ENCODE measurements at regions of chr3 and their contacts with region 1.

Region 1: DNA sequence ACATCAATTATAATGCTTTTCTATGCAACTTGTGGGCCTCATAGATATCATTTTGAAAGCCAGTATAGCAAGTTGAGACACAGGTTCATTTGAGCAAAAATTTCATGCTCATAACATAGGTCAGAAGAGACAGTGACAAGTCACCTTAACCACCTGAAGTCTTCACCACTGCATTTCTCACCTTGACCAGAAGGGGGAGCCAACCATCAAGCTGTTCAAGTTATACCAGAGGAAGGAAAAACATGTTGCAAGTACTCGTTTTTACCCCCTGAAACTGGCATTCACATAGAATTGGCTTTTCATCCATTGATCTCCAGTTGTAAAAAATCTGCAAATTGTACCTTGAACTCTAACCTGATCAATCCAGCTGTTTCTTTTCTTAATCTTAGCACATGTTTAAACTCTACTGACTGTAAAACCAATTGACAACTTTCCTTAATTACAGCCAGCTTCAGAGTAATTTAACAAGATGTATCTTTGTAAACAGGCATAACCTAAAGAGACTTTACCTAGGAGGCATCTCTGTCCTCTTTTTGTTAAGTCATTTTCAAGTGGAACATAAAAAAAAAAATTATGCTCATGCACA is 1.4 kb downstream of the LMOD3 start:
- DNase-seq: peak; percentile 64
- ATAC-seq: peak; percentile 64 to 69

Region 2: DNA sequence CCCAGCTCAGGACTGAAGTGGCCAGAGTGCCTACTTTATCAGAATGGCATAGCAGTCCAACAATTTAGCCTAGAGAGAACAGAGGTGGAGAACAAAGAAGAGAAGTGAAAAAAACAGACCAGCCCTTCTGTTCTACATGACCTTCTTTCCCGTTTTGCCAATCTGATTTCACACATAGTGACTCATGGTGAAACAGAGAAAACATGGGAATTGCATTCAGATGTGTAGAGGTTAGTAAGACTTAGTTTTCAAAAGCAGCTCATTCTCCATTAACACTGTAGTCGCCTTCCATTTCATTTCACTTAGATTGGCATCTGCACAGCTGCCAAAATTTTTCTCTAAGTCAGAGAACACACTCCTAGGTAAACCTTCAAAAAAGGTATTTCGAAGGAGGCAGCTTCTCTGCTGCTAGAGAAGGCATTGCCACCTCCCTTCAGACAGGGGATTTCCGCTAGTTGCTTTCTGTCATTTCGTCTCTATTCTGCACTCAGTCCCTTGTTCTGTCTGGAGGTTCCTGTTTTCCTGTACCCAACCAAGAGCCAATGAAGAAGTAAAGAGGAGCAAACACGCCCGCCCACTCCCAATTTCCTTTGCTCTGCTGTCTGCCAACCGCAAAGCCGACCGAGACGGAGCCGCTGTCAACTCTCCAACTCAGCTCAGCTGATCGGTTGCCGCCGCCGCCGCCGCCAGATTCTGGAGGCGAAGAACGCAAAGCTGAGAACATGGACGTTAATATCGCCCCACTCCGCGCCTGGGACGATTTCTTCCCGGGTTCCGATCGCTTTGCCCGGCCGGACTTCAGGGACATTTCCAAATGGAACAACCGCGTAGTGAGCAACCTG is 36.4 kb before region 1 on chr3 and contains the start of gene ARL6IP5:
- intact Hi-C with region 1: loop called in 1 of 2 experiments (anchors 5 kb)
- DNase-seq: peak; percentile 94
- ATAC-seq: peak; percentile 73 to 75
- total RNA-seq, gene ARL6IP5: 165 to 166 TPM